ENCODE measurements at regions of chr10 and their contacts with region 1.

Region 1: GRCh38 chr10:96374985-96375830 is 16.4 kb upstream of the OPALIN start:
- DNase-seq: no peak
- H3K4me3 ChIP-seq: peak overlapping the region; percentile 58
- CTCF ChIP-seq: peak; percentile 97

Region 2: DNA sequence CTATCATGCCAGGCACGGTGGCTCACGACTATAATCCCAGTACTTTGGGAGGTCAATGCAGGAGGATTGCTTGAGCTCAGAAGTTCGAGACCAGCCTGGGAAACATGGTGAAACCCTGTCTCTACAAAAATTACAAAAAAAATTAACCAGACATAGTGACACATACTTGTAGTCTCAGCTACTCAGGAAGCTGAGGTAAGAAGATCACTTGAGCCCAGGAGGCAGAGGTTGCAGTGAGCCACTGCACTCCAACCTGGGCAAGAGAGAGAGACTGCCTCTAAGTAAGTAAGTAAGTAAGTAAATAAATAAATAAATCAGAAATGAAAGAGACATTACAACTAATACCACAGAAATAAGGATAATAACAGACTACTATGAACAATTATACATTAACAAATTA is 1120.6 kb before region 1 on chr10:
- CTCF ChIA-PET with region 1: no interaction called
- POLR2A ChIA-PET with region 1: no interaction called
- DNase-seq: no peak
- H3K4me3 ChIP-seq: no peak overlapping the region
- CTCF ChIP-seq: no peak

Region 3: GRCh38 chr10:96244354-96244753 is 130.9 kb before region 1 on chr10:
- CTCF ChIA-PET with region 1: no interaction called
- POLR2A ChIA-PET with region 1: no interaction called
- DNase-seq: no peak
- H3K4me3 ChIP-seq: no peak overlapping the region
- CTCF ChIP-seq: no peak

Region 4: DNA sequence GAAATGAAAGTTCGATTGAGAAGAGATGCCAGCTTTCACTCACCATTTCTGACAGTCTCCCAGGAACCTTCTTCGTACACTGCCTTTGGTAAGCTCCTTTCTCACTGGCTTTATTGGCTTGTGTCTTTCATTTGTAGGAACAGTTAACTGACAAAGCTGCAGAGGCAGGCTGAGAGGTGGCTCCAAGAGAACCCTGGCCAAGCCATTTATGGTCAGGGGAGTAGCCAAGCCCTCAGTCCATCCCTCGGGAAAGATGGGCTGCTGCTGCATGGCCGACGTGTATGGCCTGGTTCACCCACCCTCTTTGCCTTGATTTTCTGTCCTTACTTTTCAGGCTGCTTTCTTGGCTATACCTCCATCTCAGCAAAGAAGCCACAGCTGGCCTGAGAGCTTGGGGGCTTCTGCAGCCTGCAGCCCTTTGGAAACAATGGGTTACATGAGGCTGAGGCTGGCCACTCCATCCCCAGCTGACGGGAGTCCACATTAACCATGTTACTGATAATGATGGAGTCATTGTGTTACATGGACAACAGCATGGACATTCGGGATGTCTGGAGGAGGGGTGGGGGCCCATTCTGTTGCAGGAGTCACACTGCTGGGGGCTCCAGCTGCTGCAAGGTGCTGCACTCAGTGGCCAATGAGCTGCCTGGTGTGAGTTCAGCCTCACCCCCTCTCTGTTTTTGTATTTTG is 16.2 kb before region 1 on chr10 and contains the start of gene OPALIN:
- CTCF ChIA-PET with region 1: interaction called, 42 read pairs
- POLR2A ChIA-PET with region 1: no interaction called
- DNase-seq: no peak
- H3K4me3 ChIP-seq: no peak within 1 kb of the TSS
- CTCF ChIP-seq: no peak

Region 5: GRCh38 chr10:96395931-96396877 is 21.0 kb after region 1 on chr10:
- CTCF ChIA-PET with region 1: interaction called, 37 read pairs
- POLR2A ChIA-PET with region 1: no interaction called
- DNase-seq: no peak
- H3K4me3 ChIP-seq: no peak overlapping the region
- CTCF ChIP-seq: peak; percentile 82

Region 6: GRCh38 chr10:96556003-96556402 is 180.8 kb after region 1 on chr10:
- CTCF ChIA-PET with region 1: interaction called, 17 read pairs
- POLR2A ChIA-PET with region 1: no interaction called
- DNase-seq: no peak
- H3K4me3 ChIP-seq: no peak overlapping the region
- CTCF ChIP-seq: peak; percentile 16

Region 7: GRCh38 chr10:96690755-96691731 is 315.8 kb after region 1 on chr10:
- CTCF ChIA-PET with region 1: no interaction called
- POLR2A ChIA-PET with region 1: no interaction called
- DNase-seq: no peak
- H3K4me3 ChIP-seq: no peak overlapping the region
- CTCF ChIP-seq: no peak

Region 8: DNA sequence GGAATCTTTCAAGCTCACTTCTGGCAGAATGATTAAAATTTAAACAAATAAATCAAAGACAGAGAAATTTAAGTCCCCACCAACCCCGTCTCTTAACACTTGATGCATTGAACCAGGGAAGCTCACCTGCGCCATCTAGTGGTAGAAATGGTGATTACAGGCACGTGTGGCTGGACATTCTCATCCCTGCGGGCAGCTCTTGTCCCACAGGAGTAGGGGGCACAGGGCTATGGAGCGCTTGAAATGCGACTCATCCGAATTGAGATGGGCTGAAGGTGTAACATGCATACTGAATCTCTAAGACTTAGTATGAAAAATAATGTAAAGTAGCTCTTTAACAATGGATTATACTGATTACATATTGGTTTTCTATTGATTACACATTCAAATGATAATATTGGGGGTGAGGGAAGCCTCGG is 835.3 kb after region 1 on chr10:
- CTCF ChIA-PET with region 1: interaction called, 10 read pairs
- POLR2A ChIA-PET with region 1: no interaction called
- DNase-seq: no peak
- H3K4me3 ChIP-seq: no peak overlapping the region
- CTCF ChIP-seq: peak; percentile 91

Measured in AG04449 (cell line).